ENCODE measurements at regions of chr2 and their contacts with region 1.

Region 1: GRCh38 chr2:241149925-241150659 is at the start of gene PPP1R7:
- DNase-seq: peak; percentile 97
- H3K4me3 Mint-ChIP-seq: peak within 1 kb of the TSS; percentile 96
- H3K27ac Mint-ChIP-seq: peak within 1 kb of the TSS; percentile 85
- H3K4me1 Mint-ChIP-seq: peaks cover 44% of the 10 kb centered on the region
- H3K27me3 Mint-ChIP-seq: no peaks in the 10 kb centered on the region
- total RNA-seq, gene PPP1R7: 91.2 to 93.8 TPM

Region 2: GRCh38 chr2:240851078-240851991 is 298.8 kb before region 1 on chr2:
- CTCF ChIA-PET with region 1: no interaction called
- intact Hi-C with region 1: loop called (anchors 5 kb)
- DNase-seq: peak; percentile 92
- H3K4me3 Mint-ChIP-seq: no peak overlapping the region
- H3K27ac Mint-ChIP-seq: no peak overlapping the region
- H3K4me1 Mint-ChIP-seq: no peaks in the 10 kb centered on the region
- H3K27me3 Mint-ChIP-seq: no peaks in the 10 kb centered on the region

Region 3: GRCh38 chr2:240946654-240947053 is 203.4 kb before region 1 on chr2:
- CTCF ChIA-PET with region 1: no interaction called
- intact Hi-C with region 1: no loop called
- DNase-seq: peak; percentile 3
- H3K4me3 Mint-ChIP-seq: no peak overlapping the region
- H3K27ac Mint-ChIP-seq: no peak overlapping the region
- H3K4me1 Mint-ChIP-seq: no peaks in the 10 kb centered on the region
- H3K27me3 Mint-ChIP-seq: no peaks in the 10 kb centered on the region

Region 4: GRCh38 chr2:241102239-241102803 is 47.8 kb before region 1 on chr2 and contains the start of gene MTERF4:
- CTCF ChIA-PET with region 1: interaction called, 4 read pairs
- intact Hi-C with region 1: loop called (anchors 1 kb)
- DNase-seq: peak; percentile 93
- H3K4me3 Mint-ChIP-seq: peak within 1 kb of the TSS; percentile 97
- H3K27ac Mint-ChIP-seq: peak within 1 kb of the TSS; percentile 99
- H3K4me1 Mint-ChIP-seq: peaks cover 62% of the 10 kb centered on the region
- H3K27me3 Mint-ChIP-seq: no peaks in the 10 kb centered on the region
- total RNA-seq, gene MTERF4: 35.0 to 38.6 TPM

Region 5: DNA sequence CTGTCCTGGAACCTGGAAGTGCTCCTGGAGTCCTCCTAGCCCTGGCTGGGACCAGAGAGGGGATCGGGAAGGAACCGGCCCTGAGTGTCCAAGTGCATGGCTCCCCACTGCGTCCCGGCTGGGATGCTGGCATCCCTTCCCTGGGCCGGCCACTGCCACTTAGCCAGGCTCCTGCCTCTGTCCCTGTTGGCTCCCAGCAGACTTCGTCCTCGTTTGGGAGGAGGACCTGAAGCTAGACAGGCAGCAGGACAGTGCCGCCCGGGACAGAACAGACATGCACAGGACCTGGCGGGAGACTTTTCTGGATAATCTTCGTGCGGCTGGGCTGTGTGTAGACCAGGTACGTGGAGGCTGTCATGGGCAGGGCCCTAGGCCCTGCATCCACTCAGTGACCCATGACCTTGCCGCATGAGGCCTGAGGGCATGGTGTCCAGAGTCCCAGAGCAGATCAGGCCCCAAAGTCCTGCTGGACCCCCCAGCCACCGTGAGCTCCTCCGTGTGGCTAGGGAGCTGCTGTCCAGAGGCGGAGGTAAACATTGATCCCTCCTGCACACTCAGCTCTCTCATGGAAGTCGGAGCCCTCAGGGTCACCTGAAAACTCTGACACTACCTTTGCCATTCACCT is 45.5 kb after region 1 on chr2:
- CTCF ChIA-PET with region 1: no interaction called
- intact Hi-C with region 1: no loop called
- DNase-seq: no peak
- H3K4me3 Mint-ChIP-seq: no peak overlapping the region
- H3K27ac Mint-ChIP-seq: no peak overlapping the region
- H3K4me1 Mint-ChIP-seq: no peaks in the 10 kb centered on the region
- H3K27me3 Mint-ChIP-seq: no peaks in the 10 kb centered on the region

Region 6: DNA sequence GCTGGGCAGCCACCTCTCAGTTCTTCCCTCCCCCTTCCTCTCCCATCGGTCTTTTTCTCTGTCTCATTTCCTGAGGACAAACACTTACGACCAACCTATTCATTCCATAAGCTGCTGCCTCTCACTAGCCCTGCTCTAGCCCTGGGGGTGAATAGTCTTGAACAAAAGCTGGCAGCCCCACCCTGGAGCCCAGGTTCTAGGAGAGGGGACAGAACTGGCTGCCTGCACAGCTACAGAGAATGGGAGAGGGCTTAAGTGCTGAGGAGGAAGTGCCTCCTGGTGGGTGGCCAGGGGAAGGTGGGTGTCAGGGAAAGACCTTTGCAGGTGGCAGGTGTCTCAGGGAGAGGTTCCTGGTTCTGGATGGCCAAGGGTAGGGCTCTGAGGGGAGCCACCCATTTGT is 61.2 kb after region 1 on chr2:
- CTCF ChIA-PET with region 1: no interaction called
- intact Hi-C with region 1: no loop called
- DNase-seq: no peak
- H3K4me3 Mint-ChIP-seq: no peak overlapping the region
- H3K27ac Mint-ChIP-seq: no peak overlapping the region
- H3K4me1 Mint-ChIP-seq: no peaks in the 10 kb centered on the region
- H3K27me3 Mint-ChIP-seq: no peaks in the 10 kb centered on the region

Region 7: GRCh38 chr2:241355983-241356870 is 206.1 kb after region 1 on chr2 and contains the start of gene FARP2:
- CTCF ChIA-PET with region 1: no interaction called
- intact Hi-C with region 1: loop called (anchors 2 kb)
- DNase-seq: peak; percentile 99
- H3K4me3 Mint-ChIP-seq: peak within 1 kb of the TSS; percentile 78
- H3K27ac Mint-ChIP-seq: peak within 1 kb of the TSS; percentile 76
- H3K4me1 Mint-ChIP-seq: peaks cover 27% of the 10 kb centered on the region
- H3K27me3 Mint-ChIP-seq: no peaks in the 10 kb centered on the region
- total RNA-seq, gene FARP2: 19.5 to 19.6 TPM

Region 8: DNA sequence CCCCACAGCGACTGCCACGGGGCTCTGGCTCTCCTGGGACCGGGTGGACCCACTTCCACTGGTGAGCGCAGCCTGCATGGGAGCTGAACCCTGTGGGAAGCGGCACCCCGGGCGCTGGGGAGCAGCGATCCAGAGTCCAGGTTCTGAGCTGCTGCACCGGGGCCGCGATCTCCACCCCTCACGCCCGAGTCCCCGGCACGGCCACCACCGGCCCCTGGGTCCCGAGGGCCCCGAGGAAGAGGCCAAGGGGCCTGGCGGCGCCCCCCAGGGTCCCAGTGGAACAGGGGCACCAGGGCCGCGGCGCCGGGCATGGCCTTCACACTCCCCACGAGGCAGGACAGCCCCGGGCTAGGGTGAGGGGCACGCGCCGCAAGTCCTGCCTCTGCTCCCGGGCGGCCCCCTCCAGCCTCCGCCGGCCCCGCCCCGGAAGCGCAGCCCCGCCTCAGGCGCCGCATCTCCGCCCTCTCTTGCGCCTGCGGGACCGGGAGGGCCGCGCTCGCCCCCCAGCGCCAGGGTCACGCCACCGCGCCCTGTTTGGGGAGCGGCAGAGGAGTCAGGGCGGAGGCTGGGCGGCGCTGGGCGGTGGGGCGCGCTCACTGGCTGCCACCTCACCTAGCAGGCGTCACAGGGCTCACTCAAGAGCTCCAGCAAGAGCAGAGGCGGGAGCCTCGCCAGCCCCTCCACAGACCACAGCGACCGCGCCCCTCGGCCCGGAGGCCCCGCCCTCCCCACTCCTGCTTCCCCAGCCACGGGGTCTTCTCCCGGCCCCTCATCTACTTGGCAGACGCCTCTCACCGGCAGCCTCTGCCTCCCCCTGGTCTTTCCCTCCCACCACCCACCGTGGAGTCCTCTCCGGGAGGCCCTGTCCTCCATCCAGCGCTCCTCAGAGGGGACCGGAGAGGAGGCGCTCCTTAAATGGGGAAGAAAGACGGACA is 460.0 kb after region 1 on chr2:
- CTCF ChIA-PET with region 1: no interaction called
- intact Hi-C with region 1: loop called (anchors 5 kb)
- DNase-seq: peak; percentile 90
- H3K4me3 Mint-ChIP-seq: peak overlapping the region; percentile 50
- H3K27ac Mint-ChIP-seq: no peak overlapping the region
- H3K4me1 Mint-ChIP-seq: peaks cover 15% of the 10 kb centered on the region
- H3K27me3 Mint-ChIP-seq: no peaks in the 10 kb centered on the region

Region 9: GRCh38 chr2:241686649-241687425 is 536.7 kb after region 1 on chr2 and contains the start of gene DTYMK:
- CTCF ChIA-PET with region 1: no interaction called
- intact Hi-C with region 1: loop called (anchors 10 kb)
- DNase-seq: peak; percentile 97
- H3K4me3 Mint-ChIP-seq: peak within 1 kb of the TSS; percentile 99
- H3K27ac Mint-ChIP-seq: peak within 1 kb of the TSS; percentile 94
- H3K4me1 Mint-ChIP-seq: peaks cover 39% of the 10 kb centered on the region
- H3K27me3 Mint-ChIP-seq: no peaks in the 10 kb centered on the region
- total RNA-seq, gene DTYMK: 88.0 to 93.8 TPM

Region 10: DNA sequence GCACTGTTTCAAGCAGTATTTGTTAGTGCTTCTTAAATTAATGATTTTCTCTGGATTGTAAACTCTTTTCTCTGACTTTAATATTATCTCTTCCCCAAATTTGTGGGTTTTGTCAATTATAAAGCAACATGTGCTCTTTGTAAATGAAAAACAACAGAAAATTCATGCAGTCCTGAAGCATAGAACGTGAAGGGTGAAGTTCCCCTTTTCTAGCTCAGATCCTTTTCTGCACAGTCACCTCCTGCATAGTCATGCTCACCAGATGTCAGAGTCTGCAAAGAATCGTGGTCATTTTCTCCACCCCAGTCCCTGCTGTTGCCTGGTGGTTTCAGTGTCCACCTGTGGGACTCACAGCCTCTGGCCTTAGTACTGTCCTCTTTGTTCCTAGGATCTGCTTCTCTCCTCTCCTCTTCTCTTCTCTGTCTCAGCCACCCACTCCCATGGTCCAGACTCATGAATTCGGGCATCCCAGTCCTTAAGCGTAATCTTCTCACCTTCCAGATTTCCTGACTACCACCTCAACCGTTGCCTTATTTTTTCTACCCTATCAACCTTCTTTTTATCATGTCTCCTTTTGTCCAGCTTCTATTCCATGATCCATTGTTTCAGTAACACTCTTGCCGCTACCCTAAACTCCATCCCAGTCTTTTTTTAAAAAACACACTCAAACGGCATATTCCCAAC is 948.5 kb after region 1 on chr2:
- CTCF ChIA-PET with region 1: no interaction called
- intact Hi-C with region 1: no loop called
- DNase-seq: no peak
- H3K4me3 Mint-ChIP-seq: no peak overlapping the region
- H3K27ac Mint-ChIP-seq: no peak overlapping the region
- H3K4me1 Mint-ChIP-seq: no peaks in the 10 kb centered on the region
- H3K27me3 Mint-ChIP-seq: no peaks in the 10 kb centered on the region